ENCODE measurements at regions of chr6 and their contacts with region 1.

Region 1: DNA sequence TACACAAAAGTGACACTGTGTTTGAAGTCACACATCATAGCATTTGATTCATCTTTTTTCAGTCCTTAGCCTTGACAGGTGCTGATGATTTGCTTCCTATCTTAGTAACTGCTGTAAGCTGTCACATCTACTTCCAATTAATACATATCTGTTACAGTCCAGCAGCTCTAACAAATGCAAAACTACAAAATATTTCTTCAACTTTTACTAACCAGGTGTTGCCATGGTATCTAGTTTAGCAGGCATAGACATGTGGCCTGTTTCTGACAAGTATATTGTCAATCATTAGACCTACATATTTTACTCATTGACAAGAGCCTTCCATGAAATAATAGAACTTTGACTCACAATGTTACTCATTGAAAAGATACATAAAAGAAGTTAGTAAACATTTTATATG is 1159.7 kb downstream of the GRIK2 start:
- DNase-seq: peak; percentile 8
- H3K27ac ChIP-seq: no peak overlapping the region
- CTCF ChIP-seq: no peak

Region 2: GRCh38 chr6:102525336-102525735 is 27.9 kb before region 1 on chr6:
- CTCF ChIA-PET with region 1: interaction called, 10 read pairs
- POLR2A ChIA-PET with region 1: no interaction called
- DNase-seq: no peak
- H3K27ac ChIP-seq: no peak overlapping the region
- CTCF ChIP-seq: no peak